Activated CD8-positive, alpha-beta T cell treated with anti-CD3 and anti-CD28 coated beads for 36 hours (primary cell): ENCODE measurements at regions of chr6 and their contacts with region 1.

Region 1: GRCh38 chr6:41306187-41306854 is 19.8 kb upstream of the TREM1 start:
- DNase-seq: peak; percentile 70
- ATAC-seq: no peak
- H3K4me3 Mint-ChIP-seq: no peak overlapping the region
- H3K27ac Mint-ChIP-seq: no peak overlapping the region
- H3K4me1 Mint-ChIP-seq: peaks cover 13% of the 10 kb centered on the region
- H3K27me3 Mint-ChIP-seq: peaks cover 9% of the 10 kb centered on the region
- CTCF ChIP-seq: peak; percentile 77

Region 2: GRCh38 chr6:41278699-41279405 is 27.5 kb before region 1 on chr6:
- CTCF ChIA-PET with region 1: interaction called, 28 read pairs
- POLR2A ChIA-PET with region 1: no interaction called
- intact Hi-C with region 1: no loop called
- DNase-seq: peak; percentile 85
- ATAC-seq: peak; percentile 92
- H3K4me3 Mint-ChIP-seq: no peak overlapping the region
- H3K27ac Mint-ChIP-seq: peak overlapping the region; percentile 55
- H3K4me1 Mint-ChIP-seq: peaks cover 12% of the 10 kb centered on the region
- H3K27me3 Mint-ChIP-seq: no peaks in the 10 kb centered on the region
- CTCF ChIP-seq: peak; percentile 72

Region 3: DNA sequence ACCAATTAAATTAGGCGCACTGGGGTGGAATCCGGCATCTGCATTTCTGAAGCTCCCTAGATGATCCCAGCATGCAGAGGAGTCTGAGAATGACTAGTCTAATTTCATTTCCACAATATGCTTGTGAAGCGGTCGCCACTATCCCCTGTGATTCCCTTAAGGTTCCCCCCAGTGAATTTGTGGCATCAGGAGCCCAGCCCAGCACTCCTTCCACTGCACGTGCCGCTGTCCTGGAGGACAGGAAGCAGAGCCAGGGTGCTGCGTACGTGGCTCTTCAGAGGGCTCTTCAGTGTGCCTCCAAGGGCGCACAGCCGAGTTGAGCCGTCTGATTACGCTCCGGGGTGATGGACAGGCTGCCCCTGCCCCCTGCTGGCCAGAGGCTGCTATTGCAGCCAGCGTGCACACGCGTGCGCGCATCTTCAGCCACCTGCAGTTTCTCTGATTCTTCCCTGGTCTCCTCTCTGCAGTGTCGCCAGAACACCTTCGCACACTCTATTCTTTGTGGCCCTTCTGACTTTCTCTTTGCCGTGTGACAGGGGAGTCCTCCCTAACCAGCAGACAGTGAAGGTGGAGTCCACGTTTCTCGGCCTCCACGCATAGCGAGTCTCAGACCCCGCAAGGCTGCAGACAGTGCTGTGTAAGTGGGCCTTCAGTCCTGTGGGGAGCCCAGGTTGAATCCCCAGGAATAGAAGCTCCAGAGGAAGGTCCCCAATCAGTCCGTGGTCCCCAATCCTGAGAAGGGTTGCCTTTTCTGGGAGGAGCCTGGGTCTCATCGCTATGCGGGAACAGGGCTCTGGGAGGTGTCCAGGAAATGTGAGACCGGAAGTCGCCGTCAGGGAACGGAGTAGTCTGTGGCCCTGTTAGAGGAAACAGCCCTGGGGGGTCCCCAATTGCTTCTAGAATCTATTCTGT is 12.6 kb after region 1 on chr6:
- CTCF ChIA-PET with region 1: interaction called, 99 read pairs
- POLR2A ChIA-PET with region 1: interaction called, 5 read pairs
- intact Hi-C with region 1: no loop called
- DNase-seq: peak; percentile 90
- ATAC-seq: peak; percentile 99
- H3K4me3 Mint-ChIP-seq: peak overlapping the region; percentile 52
- H3K27ac Mint-ChIP-seq: peak overlapping the region; percentile 80
- H3K4me1 Mint-ChIP-seq: peaks cover 10% of the 10 kb centered on the region
- H3K27me3 Mint-ChIP-seq: peaks cover 14% of the 10 kb centered on the region
- CTCF ChIP-seq: peak; percentile 99

Region 4: GRCh38 chr6:41367700-41368099 is 61.4 kb after region 1 on chr6:
- CTCF ChIA-PET with region 1: interaction called, 31 read pairs
- POLR2A ChIA-PET with region 1: no interaction called
- intact Hi-C with region 1: no loop called
- DNase-seq: peak; percentile 18
- ATAC-seq: no peak
- H3K4me3 Mint-ChIP-seq: no peak overlapping the region
- H3K27ac Mint-ChIP-seq: no peak overlapping the region
- H3K4me1 Mint-ChIP-seq: peaks cover 16% of the 10 kb centered on the region
- H3K27me3 Mint-ChIP-seq: peaks cover 39% of the 10 kb centered on the region
- CTCF ChIP-seq: no peak